ENCODE measurements at regions of chr6 and their contacts with region 1.

Region 1: GRCh38 chr6:32087574-32088486 is 21.3 kb downstream of the TNXB start:
- DNase-seq: peak; percentile 89
- ATAC-seq: peak; percentile 93
- H3K4me3 Mint-ChIP-seq: no peak overlapping the region
- H3K27ac Mint-ChIP-seq: no peak overlapping the region
- H3K4me1 Mint-ChIP-seq: peaks cover 9% of the 10 kb centered on the region
- H3K27me3 Mint-ChIP-seq: peaks cover 27% of the 10 kb centered on the region

Region 2: GRCh38 chr6:31143148-31143547 is 944.7 kb before region 1 on chr6:
- CTCF ChIA-PET with region 1: no interaction called
- POLR2A ChIA-PET with region 1: no interaction called
- intact Hi-C with region 1: no loop called
- DNase-seq: no peak
- ATAC-seq: no peak
- H3K4me3 Mint-ChIP-seq: no peak overlapping the region
- H3K27ac Mint-ChIP-seq: no peak overlapping the region
- H3K4me1 Mint-ChIP-seq: no peaks in the 10 kb centered on the region
- H3K27me3 Mint-ChIP-seq: no peaks in the 10 kb centered on the region

Region 3: DNA sequence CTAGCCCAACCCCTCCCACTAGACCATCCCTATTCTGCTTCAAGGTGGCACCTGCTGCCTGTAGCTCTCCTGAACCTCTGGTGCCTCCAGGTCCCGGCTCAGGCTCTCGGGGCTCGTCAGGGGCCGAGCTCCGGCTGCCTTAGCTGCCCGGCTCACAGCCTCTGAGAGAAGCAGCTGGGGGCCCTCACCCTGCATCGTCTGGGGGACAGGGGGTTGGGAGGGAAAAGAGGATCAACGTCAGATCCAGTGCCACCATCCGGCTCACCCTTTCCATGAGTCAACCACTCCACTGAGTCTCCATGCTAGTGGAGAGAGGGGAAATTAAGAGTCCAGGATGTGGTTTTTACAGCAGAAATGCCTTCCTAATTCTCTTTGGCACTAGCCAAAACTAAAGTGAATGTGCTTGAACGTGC is 448.4 kb before region 1 on chr6:
- CTCF ChIA-PET with region 1: no interaction called
- POLR2A ChIA-PET with region 1: interaction called, 10 read pairs
- intact Hi-C with region 1: no loop called
- DNase-seq: peak; percentile 61
- ATAC-seq: peak; percentile 46
- H3K4me3 Mint-ChIP-seq: no peak overlapping the region
- H3K27ac Mint-ChIP-seq: peak overlapping the region; percentile 86
- H3K4me1 Mint-ChIP-seq: peaks cover 7% of the 10 kb centered on the region
- H3K27me3 Mint-ChIP-seq: no peaks in the 10 kb centered on the region

Region 4: DNA sequence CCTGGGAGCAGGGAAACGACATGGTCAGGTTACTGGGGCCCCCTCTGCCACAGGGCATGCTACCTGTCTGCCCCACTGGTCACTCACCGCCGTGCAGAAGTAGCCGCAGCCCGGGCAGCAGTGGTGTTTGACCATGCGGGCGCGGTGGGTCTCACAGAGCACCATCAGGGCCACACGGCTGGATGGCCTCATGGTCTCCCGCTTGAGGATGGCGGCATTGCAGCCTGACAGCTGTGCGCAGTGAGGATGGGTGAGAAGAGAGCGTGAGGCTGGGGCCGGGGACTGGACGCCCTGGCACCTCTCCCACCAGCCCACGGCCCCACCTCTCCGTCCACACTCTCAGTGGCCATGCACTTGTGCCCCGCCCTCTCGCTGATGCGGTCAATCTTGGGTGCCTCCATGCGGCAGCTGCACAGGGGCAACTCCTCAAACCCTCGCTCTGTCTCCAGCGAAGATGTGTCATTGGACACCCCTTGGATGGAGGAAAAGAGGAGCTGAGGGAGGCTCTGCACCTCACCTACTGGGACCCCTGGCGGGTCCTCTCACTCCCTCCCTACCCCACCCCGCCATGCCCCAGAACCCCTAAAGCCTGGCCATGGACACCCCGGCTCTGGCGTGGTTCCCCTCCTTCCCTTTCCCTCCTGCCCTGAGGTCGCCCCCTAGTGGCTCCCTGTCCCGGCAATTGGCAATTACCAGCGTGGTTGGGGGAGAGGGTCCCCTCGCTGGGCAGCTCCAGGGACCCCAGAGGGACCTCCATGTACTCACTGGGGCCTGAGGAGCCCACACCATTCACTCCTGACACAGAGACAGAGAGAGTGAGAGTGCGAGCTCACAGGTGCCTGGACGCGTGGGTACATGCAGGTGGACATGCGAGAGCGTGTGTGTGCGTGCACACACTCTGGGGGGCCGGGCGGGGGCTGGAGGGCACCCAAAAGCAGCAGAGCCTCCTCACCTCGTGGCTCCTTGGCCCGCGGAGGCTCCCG is 199.3 kb before region 1 on chr6:
- CTCF ChIA-PET with region 1: no interaction called
- POLR2A ChIA-PET with region 1: no interaction called
- intact Hi-C with region 1: no loop called
- DNase-seq: peak; percentile 79
- ATAC-seq: no peak
- H3K4me3 Mint-ChIP-seq: no peak overlapping the region
- H3K27ac Mint-ChIP-seq: no peak overlapping the region
- H3K4me1 Mint-ChIP-seq: no peaks in the 10 kb centered on the region
- H3K27me3 Mint-ChIP-seq: no peaks in the 10 kb centered on the region

Region 5: GRCh38 chr6:31901953-31902643 is 185.7 kb before region 1 on chr6 and contains the start of gene ZBTB12:
- CTCF ChIA-PET with region 1: no interaction called
- POLR2A ChIA-PET with region 1: no interaction called
- intact Hi-C with region 1: no loop called
- DNase-seq: peak; percentile 92
- ATAC-seq: peak; percentile 63
- H3K4me3 Mint-ChIP-seq: peak within 1 kb of the TSS; percentile 69
- H3K27ac Mint-ChIP-seq: peak within 1 kb of the TSS; percentile 78
- H3K4me1 Mint-ChIP-seq: peaks cover 25% of the 10 kb centered on the region
- H3K27me3 Mint-ChIP-seq: no peaks in the 10 kb centered on the region
- total RNA-seq, gene ZBTB12: 1.9 to 2.4 TPM

Measured in activated CD4-positive, alpha-beta T cell treated with anti-CD3 and anti-CD28 coated beads for 36 hours (primary cell).